ENCODE measurements at regions of chr3 and their contacts with region 1.

Region 1: DNA sequence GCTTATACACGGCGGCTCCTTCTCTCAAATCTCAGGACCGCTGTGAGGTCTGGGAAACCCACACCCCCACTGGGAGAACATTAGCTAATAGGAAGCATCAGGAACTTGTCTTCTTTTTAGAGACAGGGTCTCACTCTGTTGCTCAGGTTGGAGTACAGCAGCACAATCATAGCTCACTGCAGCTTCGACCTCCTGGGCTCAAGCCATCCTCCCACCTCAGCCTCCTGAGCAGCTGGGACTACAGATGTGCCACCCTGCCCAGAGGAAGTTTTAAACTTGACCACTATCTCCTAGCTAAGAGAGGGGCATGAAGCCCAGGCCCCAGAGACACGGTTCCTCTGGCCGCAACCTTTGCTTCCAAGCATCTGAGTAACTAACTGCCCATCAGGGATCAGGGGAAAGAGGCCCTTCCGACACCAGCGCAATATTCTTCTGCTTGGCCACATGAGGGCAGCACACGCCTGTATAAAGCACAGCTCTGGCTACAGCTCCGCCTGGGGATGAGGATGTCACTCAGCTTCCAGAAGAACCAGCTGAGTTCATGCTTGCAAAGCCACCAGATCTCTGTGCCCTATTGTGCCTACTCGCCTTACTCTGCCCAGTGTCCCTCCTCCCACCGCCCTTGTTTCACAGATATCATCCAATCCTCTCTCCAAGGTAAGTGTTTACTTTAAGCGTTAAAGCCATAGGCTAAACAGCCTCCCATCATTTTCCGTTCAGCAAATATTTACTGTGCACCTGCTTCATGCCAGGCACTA is 57.5 kb upstream of the SLC6A11 start:
- DNase-seq: no peak
- H3K4me3 ChIP-seq: no peak overlapping the region
- H3K27ac ChIP-seq: no peak overlapping the region
- H3K4me1 ChIP-seq: no peaks in the 10 kb centered on the region
- H3K27me3 ChIP-seq: peaks cover 0 to 77% (median 0%) of the 10 kb centered on the region in 7 donors
- CTCF ChIP-seq: peak; percentile 43 to 79 (median 68)
- POLR2A ChIP-seq: no peak

Region 2: GRCh38 chr3:10883478-10884234 is 125.2 kb after region 1 on chr3:
- intact Hi-C with region 1: loop called (anchors 5 kb)
- DNase-seq: no peak
- H3K4me3 ChIP-seq: no peak overlapping the region
- H3K27ac ChIP-seq: no peak overlapping the region
- H3K4me1 ChIP-seq: no peaks in the 10 kb centered on the region
- H3K27me3 ChIP-seq: peaks cover 0 to 14% (median 0%) of the 10 kb centered on the region in 7 donors
- CTCF ChIP-seq: peak in 5 of 11 experiments; percentile 22 to 35 (median 33)
- POLR2A ChIP-seq: no peak

Region 3: DNA sequence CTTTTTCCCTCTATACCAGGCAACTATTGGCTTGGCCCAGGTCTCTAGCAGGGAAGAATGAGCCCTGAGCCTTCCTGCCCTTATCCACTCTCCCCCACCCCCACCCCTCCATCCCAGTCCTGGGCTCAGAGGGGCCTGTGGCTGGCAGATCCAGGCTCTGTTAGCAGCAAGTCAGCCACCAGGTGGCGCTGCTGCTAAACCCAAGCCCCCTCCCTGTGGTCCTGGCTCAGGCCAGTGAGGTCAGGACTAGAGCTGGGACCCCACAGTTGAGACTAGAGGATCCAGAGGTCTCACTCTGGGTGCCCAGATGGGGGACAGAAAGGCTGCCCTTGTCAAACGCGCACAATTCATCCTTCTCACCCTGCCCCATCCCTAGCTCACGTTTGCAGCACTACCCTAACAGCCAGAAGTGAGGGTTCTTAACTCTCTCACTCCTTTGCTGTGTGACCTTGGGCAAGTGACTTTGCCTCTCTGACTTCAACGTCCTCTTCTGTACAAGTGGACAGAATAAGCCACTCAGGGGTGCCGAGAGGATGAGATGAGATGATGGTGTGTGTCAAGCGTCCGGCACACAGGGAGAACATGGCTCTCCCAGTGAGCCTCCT is 187.3 kb after region 1 on chr3:
- intact Hi-C with region 1: loop called (anchors 10 kb)
- DNase-seq: peak; percentile 88
- H3K4me3 ChIP-seq: no peak overlapping the region
- H3K27ac ChIP-seq: no peak overlapping the region
- H3K4me1 ChIP-seq: no peaks in the 10 kb centered on the region
- H3K27me3 ChIP-seq: peaks cover 0 to 55% (median 0%) of the 10 kb centered on the region in 7 donors
- CTCF ChIP-seq: peak in 10 of 11 experiments; percentile 28 to 86 (median 72)
- POLR2A ChIP-seq: no peak

Region 4: DNA sequence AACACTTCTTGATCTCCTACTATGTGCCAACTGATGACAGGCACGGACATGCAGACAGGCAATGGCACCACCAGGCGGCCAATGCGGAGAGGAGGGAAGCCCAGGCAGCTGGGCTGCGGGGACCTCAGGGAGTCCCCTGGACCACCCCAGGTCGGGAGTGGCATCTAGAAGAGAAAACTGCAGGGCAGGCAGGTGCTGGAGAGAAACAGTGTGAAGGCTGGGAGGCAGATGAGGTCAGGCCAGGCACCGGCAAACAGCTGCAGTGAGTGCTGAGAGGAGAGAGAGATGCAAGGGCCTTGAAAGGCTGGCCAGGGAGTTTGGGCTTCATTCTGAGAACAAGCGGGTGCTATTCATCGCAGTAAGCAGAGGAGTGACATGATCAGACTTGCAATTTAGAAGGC is 263.1 kb after region 1 on chr3:
- intact Hi-C with region 1: no loop called
- DNase-seq: no peak
- H3K4me3 ChIP-seq: no peak overlapping the region
- H3K27ac ChIP-seq: no peak overlapping the region
- H3K4me1 ChIP-seq: no peaks in the 10 kb centered on the region
- H3K27me3 ChIP-seq: peaks cover 0 to 45% (median 0%) of the 10 kb centered on the region in 7 donors
- CTCF ChIP-seq: no peak
- POLR2A ChIP-seq: no peak

Region 5: GRCh38 chr3:11059090-11059798 is 300.8 kb after region 1 on chr3:
- intact Hi-C with region 1: loop called (anchors 5 kb)
- DNase-seq: no peak
- H3K4me3 ChIP-seq: no peak overlapping the region
- H3K27ac ChIP-seq: no peak overlapping the region
- H3K4me1 ChIP-seq: peaks cover 0 to 15% (median 10%) of the 10 kb centered on the region in 6 donors
- H3K27me3 ChIP-seq: peaks cover 0 to 57% (median 9%) of the 10 kb centered on the region in 7 donors
- CTCF ChIP-seq: peak; percentile 31 to 75 (median 67)
- POLR2A ChIP-seq: no peak

Region 6: GRCh38 chr3:11335056-11335608 is 576.6 kb after region 1 on chr3:
- intact Hi-C with region 1: loop called (anchors 10 kb)
- DNase-seq: no peak
- H3K4me3 ChIP-seq: no peak overlapping the region
- H3K27ac ChIP-seq: no peak overlapping the region
- H3K4me1 ChIP-seq: no peaks in the 10 kb centered on the region
- H3K27me3 ChIP-seq: no peaks in the 10 kb centered on the region
- CTCF ChIP-seq: peak in 10 of 11 experiments; percentile 29 to 73 (median 62)
- POLR2A ChIP-seq: no peak